ENCODE measurements at regions of chr9 and their contacts with region 1.

Region 1: GRCh38 chr9:19769208-19769607 is 19.6 kb downstream of the SLC24A2 start:
- DNase-seq: no peak
- H3K4me3 ChIP-seq: no peak overlapping the region
- H3K27ac ChIP-seq: no peak overlapping the region
- H3K4me1 ChIP-seq: no peaks in the 10 kb centered on the region
- H3K27me3 ChIP-seq: no peaks in the 10 kb centered on the region
- CTCF ChIP-seq: no peak
- POLR2A ChIP-seq: no peak

Region 2: DNA sequence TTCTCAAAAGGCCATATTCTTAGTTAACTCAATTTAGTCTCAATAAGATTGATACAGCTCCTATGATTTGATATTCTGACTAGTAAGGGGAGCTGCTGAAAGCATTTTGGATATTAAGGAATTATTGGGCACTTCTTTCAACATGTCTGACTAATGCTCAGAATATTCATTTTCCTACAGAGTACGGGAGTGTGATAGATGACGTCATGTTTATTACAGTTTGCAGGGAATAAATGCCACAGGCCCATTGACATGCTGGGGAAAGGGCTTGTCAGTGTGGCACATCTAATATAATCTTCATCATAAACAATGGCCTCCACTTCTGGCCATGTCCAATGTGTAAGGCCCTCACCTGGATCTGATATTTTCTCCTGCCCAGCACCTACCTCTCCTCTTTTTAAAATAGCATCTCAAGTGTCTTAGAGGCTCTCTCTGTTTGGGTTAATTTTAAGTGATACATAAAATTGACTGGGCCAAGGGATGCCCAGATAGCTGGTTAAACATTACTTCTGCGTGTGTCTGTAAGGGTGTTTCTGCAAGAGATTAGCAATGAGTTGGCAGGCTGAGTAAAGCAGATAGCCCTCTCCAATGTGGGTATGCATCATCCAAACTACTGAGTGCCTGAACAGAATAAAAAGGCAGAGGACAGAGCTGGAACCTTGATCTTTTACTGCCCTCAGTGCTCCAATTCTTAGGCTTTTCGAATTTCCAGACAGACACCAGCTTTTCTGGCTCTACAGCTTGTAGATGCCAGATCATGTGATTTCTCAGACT is 79.7 kb before region 1 on chr9:
- intact Hi-C with region 1: no loop called
- DNase-seq: no peak
- H3K4me3 ChIP-seq: no peak overlapping the region
- H3K27ac ChIP-seq: no peak overlapping the region
- H3K4me1 ChIP-seq: no peaks in the 10 kb centered on the region
- H3K27me3 ChIP-seq: no peaks in the 10 kb centered on the region
- CTCF ChIP-seq: no peak
- POLR2A ChIP-seq: no peak

Region 3: GRCh38 chr9:20579524-20580314 is 810.5 kb after region 1 on chr9:
- intact Hi-C with region 1: no loop called
- DNase-seq: no peak
- H3K4me3 ChIP-seq: no peak overlapping the region
- H3K27ac ChIP-seq: peak overlapping the region in 1 of 2 donors; percentile 61
- H3K4me1 ChIP-seq: peaks cover 0 to 9% of the 10 kb centered on the region in 2 donors
- H3K27me3 ChIP-seq: no peaks in the 10 kb centered on the region
- CTCF ChIP-seq: no peak
- POLR2A ChIP-seq: no peak

Region 4: DNA sequence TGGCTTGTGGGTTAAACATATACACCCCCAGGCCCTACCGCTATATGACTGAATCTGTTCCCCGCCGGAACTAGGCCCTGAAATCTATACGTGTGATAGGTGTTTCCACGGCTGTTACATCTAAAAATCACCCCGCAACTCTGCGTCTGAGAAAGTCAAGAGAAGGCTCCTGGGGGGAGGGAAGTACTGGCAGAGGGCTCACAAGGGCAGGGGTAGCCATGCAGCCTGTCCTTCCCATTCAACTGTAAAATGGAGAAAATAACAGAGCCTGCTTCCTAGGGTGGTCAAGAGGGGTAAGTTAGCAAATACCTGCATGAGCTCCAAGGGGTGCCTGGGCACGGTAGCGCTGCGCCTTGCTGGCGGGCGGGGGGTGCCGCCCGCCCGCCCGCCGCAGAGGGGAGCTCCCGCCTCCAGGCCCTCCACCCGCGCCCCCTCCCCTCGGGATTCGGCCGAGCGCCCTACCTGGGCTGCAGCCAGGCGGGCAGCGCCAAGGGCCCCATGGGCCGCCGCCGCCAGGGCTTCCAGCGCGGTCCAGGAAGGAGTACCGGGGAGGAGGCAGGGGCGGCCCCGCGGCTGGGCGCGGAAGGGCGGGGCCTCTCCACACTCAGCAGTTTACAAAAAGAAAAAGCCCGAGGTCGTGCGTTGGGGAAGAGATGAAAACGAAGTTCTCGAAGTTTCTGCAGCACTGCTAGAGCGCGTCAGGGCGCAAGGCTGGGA is 1262.0 kb after region 1 on chr9 and contains the start of gene HACD4:
- intact Hi-C with region 1: loop called (anchors 10 kb)
- DNase-seq: peak in 1 of 2 donors; percentile 31
- H3K4me3 ChIP-seq: peak within 1 kb of the TSS; percentile 58 to 81 (median 69)
- H3K27ac ChIP-seq: peak within 1 kb of the TSS; percentile 80
- H3K4me1 ChIP-seq: no peaks in the 10 kb centered on the region
- H3K27me3 ChIP-seq: no peaks in the 10 kb centered on the region
- CTCF ChIP-seq: no peak
- POLR2A ChIP-seq: no peak
- total RNA-seq, gene HACD4: 3.3 to 5.1 (median 4.0) TPM

Region 5: GRCh38 chr9:21340735-21341134 is 1571.5 kb after region 1 on chr9:
- intact Hi-C with region 1: loop called (anchors 5 kb)
- DNase-seq: no peak
- H3K4me3 ChIP-seq: no peak overlapping the region
- H3K27ac ChIP-seq: no peak overlapping the region
- H3K4me1 ChIP-seq: no peaks in the 10 kb centered on the region
- H3K27me3 ChIP-seq: no peaks in the 10 kb centered on the region
- CTCF ChIP-seq: no peak
- POLR2A ChIP-seq: no peak

Measured in breast epithelium (tissue), 4 donors.